Activated B cell treated with CpG ODN at 0.5 μM for 24 hours (primary cell): ENCODE measurements at regions of chr5 and their contacts with region 1.

Region 1: DNA sequence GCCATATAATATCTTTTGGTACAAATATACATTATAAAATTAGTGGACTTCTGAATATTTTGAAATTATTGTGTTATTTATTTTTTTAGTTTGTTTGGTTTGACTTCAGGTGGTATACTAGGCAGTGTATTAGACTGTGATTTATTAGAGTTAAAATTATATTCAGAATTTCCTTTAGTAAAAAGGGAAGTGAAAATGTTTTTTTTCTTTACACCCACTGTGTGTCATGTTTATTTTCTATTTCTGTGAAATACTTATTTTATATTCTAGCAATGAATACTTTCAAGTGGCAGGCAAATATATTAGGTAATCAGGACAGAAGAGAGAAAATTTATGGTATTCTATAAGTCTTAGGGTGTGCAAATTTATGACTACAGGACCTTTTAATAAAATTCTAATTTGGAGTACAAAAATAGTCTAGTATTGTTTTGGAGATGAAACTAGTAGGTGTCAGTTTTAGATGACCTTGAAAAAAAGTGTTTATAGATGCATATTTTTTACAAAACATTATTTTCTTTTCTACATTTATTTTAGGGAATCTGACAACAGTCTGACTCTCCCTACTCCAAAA is 8.8 kb downstream of the CSNK1G3 start:
- DNase-seq: no peak
- ATAC-seq: peak; percentile 55
- H3K4me3 Mint-ChIP-seq: peak overlapping the region; percentile 53
- H3K27ac Mint-ChIP-seq: peak overlapping the region; percentile 61
- H3K4me1 Mint-ChIP-seq: peaks cover 90% of the 10 kb centered on the region
- H3K27me3 Mint-ChIP-seq: no peaks in the 10 kb centered on the region
- CTCF ChIP-seq: no peak

Region 2: DNA sequence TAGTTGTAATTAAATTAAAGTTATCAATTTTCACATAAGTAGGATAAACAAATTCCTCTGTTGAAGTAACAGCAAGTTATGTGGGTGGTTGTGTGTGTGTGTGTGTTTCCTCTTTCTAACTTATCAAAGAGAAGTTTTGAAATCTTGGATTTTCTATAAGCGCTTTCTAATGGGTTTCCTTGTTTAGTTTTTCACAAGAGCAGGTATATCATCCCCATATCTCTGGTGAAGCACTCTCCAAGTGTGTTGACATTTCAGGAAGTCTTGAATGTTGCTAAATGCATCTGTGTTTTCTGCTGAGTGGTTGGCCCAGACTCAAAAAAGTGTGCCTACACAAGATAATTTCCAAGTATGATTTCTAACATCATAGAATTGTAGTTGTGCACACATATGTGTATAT is 388.4 kb before region 1 on chr5:
- CTCF ChIA-PET with region 1: no interaction called
- POLR2A ChIA-PET with region 1: no interaction called
- intact Hi-C with region 1: no loop called
- DNase-seq: no peak
- ATAC-seq: no peak
- H3K4me3 Mint-ChIP-seq: no peak overlapping the region
- H3K27ac Mint-ChIP-seq: no peak overlapping the region
- H3K4me1 Mint-ChIP-seq: no peaks in the 10 kb centered on the region
- H3K27me3 Mint-ChIP-seq: peaks cover 30% of the 10 kb centered on the region
- CTCF ChIP-seq: no peak

Region 3: GRCh38 chr5:123471385-123471784 is 49.4 kb before region 1 on chr5:
- CTCF ChIA-PET with region 1: no interaction called
- POLR2A ChIA-PET with region 1: no interaction called
- intact Hi-C with region 1: no loop called
- DNase-seq: no peak
- ATAC-seq: no peak
- H3K4me3 Mint-ChIP-seq: no peak overlapping the region
- H3K27ac Mint-ChIP-seq: no peak overlapping the region
- H3K4me1 Mint-ChIP-seq: no peaks in the 10 kb centered on the region
- H3K27me3 Mint-ChIP-seq: peaks cover 8% of the 10 kb centered on the region
- CTCF ChIP-seq: no peak

Region 4: DNA sequence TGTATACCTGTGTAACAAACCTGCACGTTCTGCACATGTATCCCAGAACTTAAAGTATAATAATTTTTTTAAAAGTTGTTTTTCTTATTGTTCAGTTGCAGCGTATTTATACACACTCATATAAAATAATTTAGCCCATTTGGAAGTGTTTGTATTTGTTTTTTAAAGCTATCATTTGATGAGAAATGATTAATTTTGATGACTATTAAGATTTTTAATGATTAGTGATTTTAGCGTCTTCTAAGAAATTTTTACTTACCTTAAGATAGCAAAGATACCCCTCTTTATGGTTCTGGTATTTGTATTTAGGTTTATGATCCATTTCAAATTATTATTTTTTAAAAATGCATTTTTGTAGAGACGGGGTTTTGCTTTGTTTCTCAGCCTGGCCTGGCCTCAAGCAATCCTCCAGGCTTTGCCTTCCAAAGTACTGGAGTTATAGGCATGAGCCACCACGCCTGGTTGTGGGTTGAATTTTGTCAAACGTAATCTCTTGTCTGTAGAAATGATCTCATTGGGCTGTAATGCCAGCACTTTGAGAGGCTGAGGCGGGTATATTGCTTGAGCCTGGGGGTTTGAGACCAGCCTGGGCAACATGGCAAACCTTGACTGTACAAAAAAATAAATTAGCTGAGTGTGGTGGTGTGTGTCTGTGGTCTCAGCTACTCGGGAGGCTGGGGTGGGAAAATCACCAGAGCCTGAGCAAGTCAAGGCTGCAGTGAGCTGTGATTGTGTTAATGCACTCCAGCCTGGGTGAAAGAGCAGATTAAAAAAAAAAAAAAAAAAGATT is 18.1 kb after region 1 on chr5:
- CTCF ChIA-PET with region 1: no interaction called
- POLR2A ChIA-PET with region 1: no interaction called
- intact Hi-C with region 1: loop called (anchors 1 kb)
- DNase-seq: no peak
- ATAC-seq: peak; percentile 14
- H3K4me3 Mint-ChIP-seq: peak overlapping the region; percentile 5
- H3K27ac Mint-ChIP-seq: peak overlapping the region; percentile 54
- H3K4me1 Mint-ChIP-seq: peaks cover 73% of the 10 kb centered on the region
- H3K27me3 Mint-ChIP-seq: no peaks in the 10 kb centered on the region
- CTCF ChIP-seq: no peak

Region 5: DNA sequence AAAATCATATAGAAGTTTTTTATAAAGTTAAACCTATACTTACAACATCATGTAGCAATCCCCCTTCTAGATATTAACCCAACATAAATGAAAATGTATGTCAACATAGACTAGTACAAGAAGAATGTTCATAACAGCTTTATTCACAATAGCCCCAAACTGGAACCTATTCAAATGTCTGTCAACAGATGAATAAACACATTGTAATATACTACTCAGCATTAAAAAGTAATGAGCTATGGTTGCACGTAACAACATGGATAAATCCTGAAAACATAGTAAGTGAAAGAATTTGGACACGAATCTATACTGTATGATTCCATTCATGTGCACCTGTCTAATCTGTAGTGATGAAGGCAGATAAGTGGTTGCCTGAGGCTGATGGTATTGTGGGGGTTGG is 65.1 kb after region 1 on chr5:
- CTCF ChIA-PET with region 1: no interaction called
- POLR2A ChIA-PET with region 1: interaction called, 9 read pairs
- intact Hi-C with region 1: loop called (anchors 5 kb)
- DNase-seq: no peak
- ATAC-seq: no peak
- H3K4me3 Mint-ChIP-seq: no peak overlapping the region
- H3K27ac Mint-ChIP-seq: no peak overlapping the region
- H3K4me1 Mint-ChIP-seq: peaks cover 2% of the 10 kb centered on the region
- H3K27me3 Mint-ChIP-seq: no peaks in the 10 kb centered on the region
- CTCF ChIP-seq: no peak

Region 6: GRCh38 chr5:123598028-123598689 is 77.4 kb after region 1 on chr5:
- CTCF ChIA-PET with region 1: no interaction called
- POLR2A ChIA-PET with region 1: no interaction called
- intact Hi-C with region 1: loop called (anchors 5 kb)
- DNase-seq: no peak
- ATAC-seq: peak; percentile 70
- H3K4me3 Mint-ChIP-seq: peak overlapping the region; percentile 33
- H3K27ac Mint-ChIP-seq: peak overlapping the region; percentile 76
- H3K4me1 Mint-ChIP-seq: peaks cover 17% of the 10 kb centered on the region
- H3K27me3 Mint-ChIP-seq: no peaks in the 10 kb centered on the region
- CTCF ChIP-seq: no peak

Region 7: DNA sequence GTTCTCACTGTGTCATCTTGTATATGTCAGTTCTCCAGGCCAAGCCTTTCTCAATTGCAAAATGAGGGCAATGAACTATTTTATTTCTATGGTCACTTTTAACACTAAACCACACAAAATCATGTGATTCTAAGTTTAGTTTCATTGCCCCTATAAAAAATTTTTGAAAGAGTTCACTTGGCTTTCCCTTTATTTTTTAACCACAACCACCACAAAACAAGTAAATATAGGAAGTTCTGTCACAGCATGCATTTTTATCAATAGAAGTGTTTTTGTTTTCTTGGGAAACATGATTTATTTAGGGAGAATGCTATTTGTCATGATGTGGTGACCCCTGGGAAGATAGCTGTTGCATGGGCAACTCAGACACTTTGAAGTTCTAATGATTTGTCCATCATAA is 160.3 kb after region 1 on chr5:
- CTCF ChIA-PET with region 1: no interaction called
- POLR2A ChIA-PET with region 1: no interaction called
- intact Hi-C with region 1: no loop called
- DNase-seq: no peak
- ATAC-seq: no peak
- H3K4me3 Mint-ChIP-seq: no peak overlapping the region
- H3K27ac Mint-ChIP-seq: no peak overlapping the region
- H3K4me1 Mint-ChIP-seq: no peaks in the 10 kb centered on the region
- H3K27me3 Mint-ChIP-seq: no peaks in the 10 kb centered on the region
- CTCF ChIP-seq: no peak